ENCODE measurements at regions of chr22 and their contacts with region 1.

Region 1: DNA sequence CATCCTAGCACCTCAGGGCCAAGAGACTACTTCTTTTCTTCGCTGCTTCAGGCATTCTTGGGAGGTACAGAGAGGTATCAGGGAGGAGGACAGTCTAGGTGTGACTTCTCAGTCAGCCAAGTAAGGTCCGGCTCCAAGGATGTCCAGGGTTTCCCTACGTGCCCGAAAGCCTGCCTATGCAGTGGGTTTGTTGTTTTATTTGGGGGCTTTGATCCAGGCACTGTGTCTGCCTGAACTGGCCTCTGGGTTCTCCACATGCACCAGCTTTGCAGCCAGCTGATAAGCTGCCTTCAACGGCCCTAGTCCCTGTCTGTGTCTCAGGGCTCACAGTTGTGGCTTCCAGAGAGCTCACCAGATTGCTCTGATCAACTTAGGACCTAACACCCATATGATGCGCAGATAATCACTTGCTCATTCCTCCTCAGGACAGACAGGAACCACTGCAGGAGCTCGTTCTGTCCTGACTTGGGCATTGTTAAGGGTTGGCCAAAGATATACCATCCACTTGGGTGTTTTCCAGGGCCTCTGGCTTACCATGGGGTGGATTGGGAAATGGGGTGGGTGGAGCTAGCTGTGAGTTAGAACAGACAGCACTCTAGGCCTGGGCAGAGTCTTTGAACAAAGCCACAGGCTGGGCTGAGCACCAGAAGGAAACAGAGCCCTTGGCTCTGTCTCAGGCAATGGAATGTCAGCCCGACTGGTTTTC is 45.5 kb upstream of the CRYBB3 start:
- DNase-seq: peak; percentile 97
- H3K4me3 Mint-ChIP-seq: no peak overlapping the region
- H3K27ac Mint-ChIP-seq: peak overlapping the region; percentile 8
- H3K4me1 Mint-ChIP-seq: peaks cover 45% of the 10 kb centered on the region
- H3K27me3 Mint-ChIP-seq: no peaks in the 10 kb centered on the region
- CTCF ChIP-seq: no peak

Region 2: DNA sequence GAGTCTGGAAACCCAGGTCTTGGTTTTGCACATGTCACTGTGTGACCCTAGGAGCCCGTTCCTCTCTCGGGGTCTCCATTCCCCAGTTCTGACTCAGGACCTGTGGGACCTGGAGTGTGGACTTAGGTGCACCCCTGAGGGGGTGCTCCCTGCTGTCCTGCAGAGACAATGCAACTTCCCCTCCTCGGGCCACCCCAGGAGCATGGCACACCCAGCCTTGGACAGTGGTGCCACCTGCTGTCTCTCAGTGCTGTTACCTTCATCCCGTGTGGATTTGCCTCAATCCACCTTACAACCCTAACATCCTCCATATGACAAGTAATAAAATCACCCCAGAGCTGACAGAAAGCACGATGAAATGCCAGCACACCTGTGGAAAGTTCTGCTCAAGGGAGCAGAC is 18.0 kb after region 1 on chr22:
- CTCF ChIA-PET with region 1: no interaction called
- POLR2A ChIA-PET with region 1: interaction called, 15 read pairs
- intact Hi-C with region 1: no loop called
- DNase-seq: peak; percentile 39
- H3K4me3 Mint-ChIP-seq: no peak overlapping the region
- H3K27ac Mint-ChIP-seq: peak overlapping the region; percentile 61
- H3K4me1 Mint-ChIP-seq: peaks cover 31% of the 10 kb centered on the region
- H3K27me3 Mint-ChIP-seq: no peaks in the 10 kb centered on the region
- CTCF ChIP-seq: no peak